Mammary epithelial cell (primary cell): ENCODE measurements at regions of chr16 and their contacts with region 1.

Region 1: DNA sequence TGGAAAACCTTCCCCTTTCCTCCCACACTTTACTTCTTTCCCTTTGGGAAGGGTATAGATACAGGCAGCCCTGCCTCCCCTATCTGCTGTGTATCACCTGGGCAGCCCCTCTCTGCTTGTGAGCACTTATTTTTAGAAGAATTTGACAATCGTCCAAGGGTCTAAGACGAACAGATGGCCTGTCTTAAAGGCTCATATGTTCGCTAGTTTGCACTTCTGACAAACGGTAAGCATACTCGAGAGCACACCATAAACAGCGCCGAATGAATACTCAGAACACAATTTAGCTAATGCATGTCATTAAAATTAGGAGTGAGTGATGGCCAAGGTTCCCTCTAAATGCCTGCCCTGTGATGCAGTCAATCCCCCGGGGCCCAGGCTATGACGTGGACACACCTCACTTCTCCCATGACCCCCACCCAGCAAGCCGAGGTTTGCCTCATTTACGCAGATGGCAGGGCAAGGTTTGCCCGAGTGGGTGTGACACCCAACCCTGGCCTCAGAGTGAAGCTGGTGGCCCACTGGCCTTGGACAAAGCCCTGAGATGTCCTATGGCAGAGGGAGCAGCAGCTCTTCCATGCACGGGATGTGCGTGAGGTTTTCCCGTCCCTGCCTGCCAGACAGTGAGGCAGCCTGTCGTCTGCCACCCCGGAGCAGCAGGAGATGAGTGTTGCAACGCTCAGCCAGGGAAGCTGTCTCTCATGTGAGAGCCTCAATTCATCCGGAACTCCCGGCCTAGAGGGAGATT is 125.2 kb downstream of the C16orf78 start:
- DNase-seq: no peak
- H3K4me3 ChIP-seq: no peak overlapping the region
- H3K27ac ChIP-seq: no peak overlapping the region
- H3K4me1 ChIP-seq: no peaks in the 10 kb centered on the region
- H3K27me3 ChIP-seq: no peaks in the 10 kb centered on the region
- CTCF ChIP-seq: no peak

Region 2: GRCh38 chr16:49365711-49366509 is 132.9 kb before region 1 on chr16:
- CTCF ChIA-PET with region 1: no interaction called
- dilution Hi-C with region 1: no loop called
- in situ Hi-C with region 1: no loop called
- intact Hi-C with region 1: no loop called
- DNase-seq: no peak
- H3K4me3 ChIP-seq: no peak overlapping the region
- H3K27ac ChIP-seq: no peak overlapping the region
- H3K4me1 ChIP-seq: no peaks in the 10 kb centered on the region
- H3K27me3 ChIP-seq: no peaks in the 10 kb centered on the region
- CTCF ChIP-seq: no peak

Region 3: GRCh38 chr16:49399594-49400364 is 99.1 kb before region 1 on chr16:
- CTCF ChIA-PET with region 1: no interaction called
- dilution Hi-C with region 1: loop called (anchors 5 kb)
- in situ Hi-C with region 1: no loop called
- intact Hi-C with region 1: no loop called
- DNase-seq: no peak
- H3K4me3 ChIP-seq: no peak overlapping the region
- H3K27ac ChIP-seq: no peak overlapping the region
- H3K4me1 ChIP-seq: no peaks in the 10 kb centered on the region
- H3K27me3 ChIP-seq: no peaks in the 10 kb centered on the region
- CTCF ChIP-seq: no peak

Region 4: GRCh38 chr16:49542391-49542891 is 43.6 kb after region 1 on chr16:
- CTCF ChIA-PET with region 1: no interaction called
- dilution Hi-C with region 1: loop called (anchors 5 kb)
- in situ Hi-C with region 1: no loop called
- intact Hi-C with region 1: no loop called
- DNase-seq: no peak
- H3K4me3 ChIP-seq: no peak overlapping the region
- H3K27ac ChIP-seq: no peak overlapping the region
- H3K4me1 ChIP-seq: no peaks in the 10 kb centered on the region
- H3K27me3 ChIP-seq: no peaks in the 10 kb centered on the region
- CTCF ChIP-seq: no peak